ENCODE measurements at regions of chr20 and their contacts with region 1.

Region 1: GRCh38 chr20:33653218-33653899 is 8.8 kb upstream of the C20orf144 start:
- DNase-seq: peak in 8 of 9 experiments; percentile 28 to 69 (median 56)
- ATAC-seq: peak; percentile 80
- H3K4me3 ChIP-seq: no peak overlapping the region
- H3K4me3 Mint-ChIP-seq: no peak overlapping the region
- H3K27ac ChIP-seq: no peak overlapping the region
- H3K27ac Mint-ChIP-seq: no peak overlapping the region
- H3K4me1 ChIP-seq: no peaks in the 10 kb centered on the region
- H3K4me1 Mint-ChIP-seq: peaks cover 14% of the 10 kb centered on the region
- H3K27me3 ChIP-seq: no peaks in the 10 kb centered on the region
- H3K27me3 Mint-ChIP-seq: no peaks in the 10 kb centered on the region
- CTCF ChIP-seq: peak; percentile 56

Region 2: GRCh38 chr20:33394721-33395120 is 258.6 kb before region 1 on chr20:
- CTCF ChIA-PET with region 1: no interaction called
- POLR2A ChIA-PET with region 1: no interaction called
- intact Hi-C with region 1: loop called in 1 of 2 experiments (anchors 5 kb)
- DNase-seq: peak in 1 of 9 experiments; percentile 20
- ATAC-seq: no peak
- H3K4me3 ChIP-seq: no peak overlapping the region
- H3K4me3 Mint-ChIP-seq: no peak overlapping the region
- H3K27ac ChIP-seq: no peak overlapping the region
- H3K27ac Mint-ChIP-seq: no peak overlapping the region
- H3K4me1 ChIP-seq: peaks cover 5% of the 10 kb centered on the region
- H3K4me1 Mint-ChIP-seq: peaks cover 36% of the 10 kb centered on the region
- H3K27me3 ChIP-seq: no peaks in the 10 kb centered on the region
- H3K27me3 Mint-ChIP-seq: no peaks in the 10 kb centered on the region
- CTCF ChIP-seq: no peak

Region 3: DNA sequence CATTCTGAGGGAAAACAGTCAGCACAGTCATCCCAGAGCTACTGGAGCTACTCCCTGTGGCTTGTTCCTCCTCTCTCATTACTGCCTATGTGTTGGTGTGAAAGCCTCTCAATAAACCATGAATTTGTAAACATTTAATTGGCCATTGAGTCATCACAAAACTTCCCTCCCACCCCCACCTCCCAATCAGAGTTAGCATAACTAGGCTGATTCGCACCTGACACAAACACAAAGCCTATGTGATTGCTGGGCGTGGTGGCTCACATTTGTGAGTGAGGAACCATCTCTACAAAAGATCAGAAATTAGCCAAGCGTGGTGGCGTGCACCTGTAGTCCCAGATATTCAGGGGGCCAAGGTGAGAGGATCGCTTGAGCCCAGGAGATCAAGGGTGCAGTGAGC is 192.6 kb before region 1 on chr20:
- CTCF ChIA-PET with region 1: interaction called, 6 read pairs
- POLR2A ChIA-PET with region 1: no interaction called
- intact Hi-C with region 1: loop called (anchors 1 kb)
- DNase-seq: no peak
- ATAC-seq: no peak
- H3K4me3 ChIP-seq: no peak overlapping the region
- H3K4me3 Mint-ChIP-seq: no peak overlapping the region
- H3K27ac ChIP-seq: no peak overlapping the region
- H3K27ac Mint-ChIP-seq: no peak overlapping the region
- H3K4me1 ChIP-seq: no peaks in the 10 kb centered on the region
- H3K4me1 Mint-ChIP-seq: no peaks in the 10 kb centered on the region
- H3K27me3 ChIP-seq: no peaks in the 10 kb centered on the region
- H3K27me3 Mint-ChIP-seq: no peaks in the 10 kb centered on the region
- CTCF ChIP-seq: no peak

Region 4: GRCh38 chr20:33781133-33781532 is 127.8 kb after region 1 on chr20:
- CTCF ChIA-PET with region 1: no interaction called
- POLR2A ChIA-PET with region 1: no interaction called
- intact Hi-C with region 1: no loop called
- DNase-seq: no peak
- ATAC-seq: no peak
- H3K4me3 ChIP-seq: no peak overlapping the region
- H3K4me3 Mint-ChIP-seq: no peak overlapping the region
- H3K27ac ChIP-seq: no peak overlapping the region
- H3K27ac Mint-ChIP-seq: no peak overlapping the region
- H3K4me1 ChIP-seq: no peaks in the 10 kb centered on the region
- H3K4me1 Mint-ChIP-seq: peaks cover 15% of the 10 kb centered on the region
- H3K27me3 ChIP-seq: no peaks in the 10 kb centered on the region
- H3K27me3 Mint-ChIP-seq: no peaks in the 10 kb centered on the region
- CTCF ChIP-seq: no peak